Activated B cell treated with CpG ODN at 0.5 μM for 24 hours (primary cell): ENCODE measurements at regions of chr1 and their contacts with region 1.

Region 1: GRCh38 chr1:40691538-40692428 is at the start of gene NFYC:
- DNase-seq: peak; percentile 86
- ATAC-seq: peak; percentile 81
- H3K4me3 Mint-ChIP-seq: peak within 1 kb of the TSS; percentile 94
- H3K27ac Mint-ChIP-seq: peak within 1 kb of the TSS; percentile 94
- H3K4me1 Mint-ChIP-seq: peaks cover 70% of the 10 kb centered on the region
- H3K27me3 Mint-ChIP-seq: no peaks in the 10 kb centered on the region
- CTCF ChIP-seq: no peak
- total RNA-seq, gene NFYC: 68.7 and 76.0 TPM in 2 replicates

Region 2: GRCh38 chr1:40476924-40477677 is 214.7 kb before region 1 on chr1 and contains the start of gene ZFP69:
- CTCF ChIA-PET with region 1: no interaction called
- POLR2A ChIA-PET with region 1: interaction called, 3 read pairs
- intact Hi-C with region 1: loop called (anchors 10 kb)
- DNase-seq: peak; percentile 79
- ATAC-seq: peak; percentile 97
- H3K4me3 Mint-ChIP-seq: peak within 1 kb of the TSS; percentile 85
- H3K27ac Mint-ChIP-seq: peak within 1 kb of the TSS; percentile 87
- H3K4me1 Mint-ChIP-seq: peaks cover 17% of the 10 kb centered on the region
- H3K27me3 Mint-ChIP-seq: no peaks in the 10 kb centered on the region
- CTCF ChIP-seq: no peak
- total RNA-seq, gene ZFP69: 4.5 and 5.1 TPM in 2 replicates

Region 3: GRCh38 chr1:40679165-40679953 is 12.4 kb before region 1 on chr1:
- CTCF ChIA-PET with region 1: no interaction called
- POLR2A ChIA-PET with region 1: interaction called, 11 read pairs
- intact Hi-C with region 1: no loop called
- DNase-seq: no peak
- ATAC-seq: no peak
- H3K4me3 Mint-ChIP-seq: no peak overlapping the region
- H3K27ac Mint-ChIP-seq: no peak overlapping the region
- H3K4me1 Mint-ChIP-seq: no peaks in the 10 kb centered on the region
- H3K27me3 Mint-ChIP-seq: no peaks in the 10 kb centered on the region
- CTCF ChIP-seq: no peak

Region 4: DNA sequence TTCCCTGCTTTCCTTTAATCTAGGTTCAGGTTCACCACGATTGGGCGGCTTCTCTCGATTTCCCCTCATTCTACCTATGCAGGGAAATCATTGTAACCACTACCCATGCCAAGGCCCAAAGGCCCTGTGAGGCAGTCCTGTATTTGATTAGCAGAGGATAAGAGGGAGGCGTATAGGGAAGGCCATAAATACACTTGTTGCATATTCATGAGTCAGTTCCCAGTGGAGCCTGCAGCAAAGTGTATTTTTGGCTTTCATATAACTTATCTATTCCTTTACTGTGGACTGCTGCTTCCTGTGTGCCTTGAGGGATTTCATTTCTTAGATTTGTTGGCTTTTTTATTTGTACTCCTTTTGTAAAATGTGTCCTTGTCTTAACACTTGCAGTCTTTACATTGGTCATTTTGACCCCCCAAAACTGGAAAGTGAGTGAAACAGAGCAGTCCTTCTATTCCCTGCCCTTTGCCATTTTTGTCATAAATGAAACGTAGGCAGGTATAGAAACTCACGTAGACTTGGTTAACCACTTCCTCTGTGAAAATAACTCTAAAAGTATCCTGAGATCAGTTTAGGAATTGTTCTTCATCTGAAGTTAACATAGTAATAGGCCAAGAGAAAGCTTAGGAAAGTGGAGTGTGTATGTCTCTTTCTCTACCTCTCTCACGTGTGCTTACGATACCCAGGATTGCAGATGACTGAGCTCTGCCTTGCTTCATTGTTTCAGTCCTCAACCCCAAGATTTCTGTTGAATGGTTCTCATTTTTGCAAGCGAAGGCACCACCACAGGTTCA is 72.2 kb after region 1 on chr1:
- CTCF ChIA-PET with region 1: no interaction called
- POLR2A ChIA-PET with region 1: interaction called, 12 read pairs
- intact Hi-C with region 1: no loop called
- DNase-seq: no peak
- ATAC-seq: no peak
- H3K4me3 Mint-ChIP-seq: no peak overlapping the region
- H3K27ac Mint-ChIP-seq: peak overlapping the region; percentile 53
- H3K4me1 Mint-ChIP-seq: peaks cover 30% of the 10 kb centered on the region
- H3K27me3 Mint-ChIP-seq: no peaks in the 10 kb centered on the region
- CTCF ChIP-seq: no peak

Region 5: GRCh38 chr1:40862008-40862863 is 170.5 kb after region 1 on chr1 and contains the start of gene CITED4:
- CTCF ChIA-PET with region 1: no interaction called
- POLR2A ChIA-PET with region 1: interaction called, 10 read pairs
- intact Hi-C with region 1: no loop called
- DNase-seq: peak; percentile 93
- ATAC-seq: peak; percentile 98
- H3K4me3 Mint-ChIP-seq: peak within 1 kb of the TSS; percentile 94
- H3K27ac Mint-ChIP-seq: peak within 1 kb of the TSS; percentile 82
- H3K4me1 Mint-ChIP-seq: peaks cover 10% of the 10 kb centered on the region
- H3K27me3 Mint-ChIP-seq: peaks cover 12% of the 10 kb centered on the region
- CTCF ChIP-seq: no peak
- total RNA-seq, gene CITED4: 0.54 and 0.98 TPM in 2 replicates